Mammary epithelial cell (primary cell): ENCODE measurements at regions of chr16 and their contacts with region 1.

Region 1: GRCh38 chr16:76653390-76654026 is 376.3 kb downstream of the CNTNAP4 start:
- DNase-seq: peak; percentile 53
- H3K4me3 ChIP-seq: no peak overlapping the region
- H3K27ac ChIP-seq: no peak overlapping the region
- H3K4me1 ChIP-seq: no peaks in the 10 kb centered on the region
- H3K27me3 ChIP-seq: no peaks in the 10 kb centered on the region
- CTCF ChIP-seq: peak; percentile 70 to 83

Region 2: GRCh38 chr16:75794426-75794825 is 859.1 kb before region 1 on chr16:
- CTCF ChIA-PET with region 1: no interaction called
- dilution Hi-C with region 1: loop called (anchors 25 kb)
- in situ Hi-C with region 1: loop called (anchors 5 kb)
- intact Hi-C with region 1: loop called (anchors 1 kb)
- DNase-seq: no peak
- H3K4me3 ChIP-seq: no peak overlapping the region
- H3K27ac ChIP-seq: no peak overlapping the region
- H3K4me1 ChIP-seq: no peaks in the 10 kb centered on the region
- H3K27me3 ChIP-seq: no peaks in the 10 kb centered on the region
- CTCF ChIP-seq: no peak